ENCODE measurements at regions of chr3 and their contacts with region 1.

Region 1: DNA sequence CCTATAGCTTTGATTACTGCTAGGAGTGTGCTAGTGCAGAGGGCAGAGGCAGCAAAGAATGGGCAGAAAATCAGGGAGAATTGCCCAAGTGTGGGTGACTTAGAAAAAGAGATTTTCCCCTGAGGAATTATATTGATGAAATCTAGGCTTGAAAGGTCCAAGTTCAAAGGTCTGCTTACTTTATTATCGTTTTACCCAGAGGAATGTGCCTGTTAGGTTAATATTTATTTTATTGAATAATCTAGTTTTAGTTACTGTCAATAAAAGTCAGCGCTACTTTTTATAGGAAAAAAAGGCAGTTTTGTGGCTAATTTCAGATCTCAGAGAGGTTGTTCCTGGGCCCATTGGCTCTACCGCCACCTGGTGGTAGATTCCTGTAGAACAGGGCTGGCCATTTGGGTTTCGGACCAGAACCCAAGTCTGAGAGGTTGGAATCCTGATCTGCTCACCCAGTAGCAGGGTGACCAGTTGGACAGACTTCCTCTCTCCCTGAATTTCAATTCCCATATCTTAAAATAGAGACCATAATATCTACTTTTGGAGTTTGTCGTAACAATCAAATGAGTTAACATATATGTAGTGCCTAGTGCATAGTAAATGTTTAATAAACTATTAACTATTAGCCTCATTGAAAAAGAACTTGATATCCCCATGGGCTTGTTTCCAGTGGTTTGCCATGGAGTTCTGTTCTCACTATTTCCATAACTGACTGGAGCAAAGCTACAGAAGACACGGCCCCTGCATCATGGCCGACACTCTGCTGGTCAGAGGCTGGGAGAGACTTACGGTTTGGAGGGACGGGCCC is 62.7 kb upstream of the ZNF148 start:
- DNase-seq: peak; percentile 57 to 81 (median 64)
- ATAC-seq: peak; percentile 47 to 62
- H3K4me3 ChIP-seq: no peak overlapping the region
- H3K27ac ChIP-seq: no peak overlapping the region
- H3K4me1 ChIP-seq: no peaks in the 10 kb centered on the region
- H3K27me3 ChIP-seq: no peaks in the 10 kb centered on the region

Region 2: DNA sequence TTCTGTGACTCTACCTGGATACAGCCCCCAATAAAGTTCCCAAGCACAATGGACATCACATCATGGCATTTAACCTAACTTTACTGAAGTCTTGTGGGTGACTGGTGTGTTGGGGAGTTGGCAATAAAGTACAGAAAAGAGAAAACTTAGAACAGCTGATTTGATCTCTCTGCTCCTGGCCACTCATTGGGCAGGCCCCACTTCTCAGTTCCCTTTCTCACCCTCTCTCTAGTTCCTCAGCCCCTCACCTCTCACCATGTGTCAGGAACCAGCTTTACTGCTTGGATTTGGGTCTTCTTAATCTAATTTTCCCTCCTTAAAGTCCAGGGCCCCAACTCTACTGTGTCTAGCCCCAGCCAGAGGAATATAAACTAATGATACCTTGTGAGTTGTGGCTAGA is 502.6 kb before region 1 on chr3:
- intact Hi-C with region 1: loop called in 2 of 4 experiments (anchors 10 kb)
- DNase-seq: no peak
- ATAC-seq: no peak
- H3K4me3 ChIP-seq: no peak overlapping the region
- H3K27ac ChIP-seq: no peak overlapping the region
- H3K4me1 ChIP-seq: no peaks in the 10 kb centered on the region
- H3K27me3 ChIP-seq: no peaks in the 10 kb centered on the region

Region 3: DNA sequence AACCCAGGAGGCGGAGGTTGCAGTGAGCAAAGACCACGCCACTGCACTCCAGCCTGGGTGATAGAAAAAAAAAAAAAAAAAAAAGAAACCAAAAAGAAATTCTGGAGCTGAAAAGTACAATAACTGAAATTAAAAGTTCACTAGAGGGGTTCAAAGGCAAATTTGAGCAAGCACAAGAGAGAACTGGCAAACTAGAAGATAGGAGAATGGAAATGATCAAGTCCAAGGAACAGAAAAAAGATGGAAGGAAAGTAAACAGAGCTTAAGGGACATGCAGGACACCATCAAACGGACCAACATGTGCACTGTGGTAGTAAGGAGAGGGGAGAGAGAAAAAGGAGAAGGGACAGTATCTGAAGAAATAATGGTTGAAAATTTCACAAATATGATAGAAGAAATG is 69.3 kb after region 1 on chr3:
- intact Hi-C with region 1: no loop called
- DNase-seq: no peak
- ATAC-seq: no peak
- H3K4me3 ChIP-seq: no peak overlapping the region
- H3K27ac ChIP-seq: no peak overlapping the region
- H3K4me1 ChIP-seq: peaks cover 3% of the 10 kb centered on the region
- H3K27me3 ChIP-seq: no peaks in the 10 kb centered on the region

Region 4: GRCh38 chr3:125585595-125586223 is 147.9 kb after region 1 on chr3:
- intact Hi-C with region 1: no loop called
- DNase-seq: peak in 2 of 3 donors; percentile 42 to 70
- ATAC-seq: peak; percentile 74 to 79
- H3K4me3 ChIP-seq: no peak overlapping the region
- H3K27ac ChIP-seq: no peak overlapping the region
- H3K4me1 ChIP-seq: peaks cover 1% of the 10 kb centered on the region
- H3K27me3 ChIP-seq: no peaks in the 10 kb centered on the region

Region 5: DNA sequence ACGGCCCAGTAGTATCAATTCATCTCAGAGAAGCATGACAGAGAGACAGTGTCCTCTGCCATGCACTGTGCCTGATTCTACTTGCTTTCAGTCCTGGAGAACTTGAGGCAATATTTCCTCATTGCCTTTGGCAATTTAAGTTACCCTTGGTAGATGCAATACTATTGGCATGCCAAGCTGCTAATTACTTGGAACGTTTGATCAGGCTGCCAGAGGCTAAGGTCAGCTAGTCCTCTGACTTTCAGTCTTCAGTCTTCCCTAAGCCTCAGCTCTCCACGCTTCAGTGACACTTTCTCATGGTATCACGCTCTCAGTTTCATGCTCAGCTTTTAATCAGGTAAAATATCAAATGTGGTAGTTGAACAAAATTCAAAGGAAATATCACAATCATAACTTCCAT is 170.6 kb after region 1 on chr3:
- intact Hi-C with region 1: no loop called
- DNase-seq: no peak
- ATAC-seq: no peak
- H3K4me3 ChIP-seq: no peak overlapping the region
- H3K27ac ChIP-seq: no peak overlapping the region
- H3K4me1 ChIP-seq: no peaks in the 10 kb centered on the region
- H3K27me3 ChIP-seq: no peaks in the 10 kb centered on the region

Measured in right cardiac atrium (tissue), 5 donors.